ENCODE measurements at regions of chr3 and their contacts with region 1.

Region 1: DNA sequence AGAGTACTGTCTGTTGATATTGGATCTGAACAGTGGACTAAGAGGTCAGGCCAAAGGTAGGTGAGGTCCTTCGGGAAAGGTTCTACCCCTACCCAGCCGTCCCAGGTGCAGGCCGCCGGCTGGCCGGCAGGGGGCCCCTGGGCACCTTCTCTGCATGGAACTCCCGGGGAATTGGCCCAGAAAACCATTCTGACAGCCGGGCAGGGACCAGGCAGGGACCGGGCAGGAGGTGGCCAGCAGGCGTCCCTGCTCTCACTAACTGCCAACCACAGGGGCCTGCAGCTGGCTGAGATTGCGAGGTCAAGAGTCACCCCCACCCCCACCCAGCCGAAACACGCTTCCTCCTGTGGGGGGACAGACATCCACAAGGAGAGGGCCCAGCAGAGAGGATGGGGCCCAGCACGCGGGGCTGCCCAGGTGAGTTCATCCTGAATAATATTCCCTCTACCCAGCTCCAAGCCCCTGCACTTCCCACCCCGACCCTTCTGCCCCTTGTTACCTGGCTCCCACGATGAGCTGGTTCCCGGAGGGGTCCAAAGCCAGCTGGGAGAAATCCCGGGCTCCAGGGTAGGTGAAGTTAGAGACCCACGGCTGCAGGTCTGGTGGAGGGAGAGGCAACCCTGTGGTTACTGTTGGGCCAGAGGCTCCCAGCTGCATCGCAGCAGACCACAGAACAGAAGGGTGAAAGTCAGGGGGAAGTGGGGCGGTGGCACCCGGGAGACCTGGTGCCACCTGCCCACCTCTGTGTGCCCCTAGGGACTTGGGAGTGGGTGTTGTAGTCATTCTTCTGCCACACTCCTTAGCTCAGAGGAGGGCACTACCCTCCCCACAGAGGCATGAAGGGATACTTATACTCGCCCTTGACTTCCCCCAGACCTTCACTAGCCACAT is 84.4 kb downstream of the SEMA5B start:
- DNase-seq: peak; percentile 69 to 90 (median 86)
- ATAC-seq: peak; percentile 95 to 99 (median 98)
- H3K4me3 ChIP-seq: no peak overlapping the region
- H3K27ac ChIP-seq: no peak overlapping the region
- H3K4me1 ChIP-seq: no peaks in the 10 kb centered on the region
- H3K27me3 ChIP-seq: no peaks in the 10 kb centered on the region
- CTCF ChIP-seq: peak; percentile 84 to 89 (median 86)

Region 2: GRCh38 chr3:122864498-122864897 is 78.7 kb before region 1 on chr3:
- intact Hi-C with region 1: no loop called
- DNase-seq: no peak
- ATAC-seq: no peak
- H3K4me3 ChIP-seq: no peak overlapping the region
- H3K27ac ChIP-seq: no peak overlapping the region
- H3K4me1 ChIP-seq: no peaks in the 10 kb centered on the region
- H3K27me3 ChIP-seq: no peaks in the 10 kb centered on the region
- CTCF ChIP-seq: no peak

Region 3: DNA sequence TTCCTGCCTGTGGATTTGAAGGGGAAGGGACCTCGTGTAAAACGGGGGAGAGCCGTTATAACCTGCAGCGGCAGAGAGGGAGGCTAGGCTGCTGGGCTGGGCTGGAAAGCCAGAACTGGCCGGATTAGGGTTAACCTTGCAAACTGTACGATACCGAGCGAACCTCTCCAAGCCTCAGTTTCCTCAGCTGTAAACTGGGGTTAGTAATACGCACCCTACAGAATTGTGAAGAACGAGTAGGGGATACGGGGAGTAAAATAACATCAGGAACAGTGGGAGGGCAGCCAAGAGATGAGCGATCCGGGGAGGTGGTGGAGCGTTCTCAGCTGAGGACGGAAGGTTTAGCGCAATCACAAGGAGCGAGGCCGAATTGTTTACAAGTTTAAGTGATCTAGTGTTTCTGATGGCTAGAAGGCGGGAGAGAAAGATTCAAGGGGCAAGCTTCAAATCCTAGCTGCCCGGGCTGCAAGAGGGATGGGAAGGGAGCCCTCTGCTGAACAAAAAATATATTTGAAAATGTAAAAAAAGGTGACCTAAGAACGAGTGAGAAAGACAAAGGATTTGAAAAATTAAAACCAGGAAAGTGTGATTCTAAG is 85.1 kb after region 1 on chr3:
- intact Hi-C with region 1: loop called in 1 of 3 experiments (anchors 10 kb)
- DNase-seq: peak in 3 of 6 donors; percentile 11 to 22 (median 16)
- ATAC-seq: peak; percentile 40 to 75 (median 71)
- H3K4me3 ChIP-seq: peak overlapping the region; percentile 38 to 68 (median 45)
- H3K27ac ChIP-seq: no peak overlapping the region
- H3K4me1 ChIP-seq: peaks cover 6 to 14% (median 10%) of the 10 kb centered on the region in 3 donors
- H3K27me3 ChIP-seq: peaks cover 0 to 4% (median 0%) of the 10 kb centered on the region in 4 donors
- CTCF ChIP-seq: peak in 1 of 4 donors; percentile 36

Region 4: GRCh38 chr3:123258811-123259420 is 315.7 kb after region 1 on chr3:
- intact Hi-C with region 1: loop called in 1 of 3 experiments (anchors 10 kb)
- DNase-seq: no peak
- ATAC-seq: peak; percentile 73 to 91 (median 86)
- H3K4me3 ChIP-seq: no peak overlapping the region
- H3K27ac ChIP-seq: no peak overlapping the region
- H3K4me1 ChIP-seq: no peaks in the 10 kb centered on the region
- H3K27me3 ChIP-seq: no peaks in the 10 kb centered on the region
- CTCF ChIP-seq: peak; percentile 18 to 41 (median 32)

Measured in pancreas (tissue), 10 donors.